ENCODE measurements at regions of chr14 and their contacts with region 1.

Region 1: GRCh38 chr14:63641473-63642228 is at the start of gene WDR89:
- DNase-seq: peak; percentile 94 to 99
- H3K4me3 ChIP-seq: peak within 1 kb of the TSS; percentile 79 to 83
- H3K27ac ChIP-seq: peak within 1 kb of the TSS; percentile 93 to 94
- H3K4me1 ChIP-seq: peaks cover 3 to 11% of the 10 kb centered on the region in 2 donors
- H3K27me3 ChIP-seq: no peaks in the 10 kb centered on the region
- CTCF ChIP-seq: peak; percentile 71 to 86 (median 76)
- total RNA-seq, gene WDR89: not detected

Region 2: DNA sequence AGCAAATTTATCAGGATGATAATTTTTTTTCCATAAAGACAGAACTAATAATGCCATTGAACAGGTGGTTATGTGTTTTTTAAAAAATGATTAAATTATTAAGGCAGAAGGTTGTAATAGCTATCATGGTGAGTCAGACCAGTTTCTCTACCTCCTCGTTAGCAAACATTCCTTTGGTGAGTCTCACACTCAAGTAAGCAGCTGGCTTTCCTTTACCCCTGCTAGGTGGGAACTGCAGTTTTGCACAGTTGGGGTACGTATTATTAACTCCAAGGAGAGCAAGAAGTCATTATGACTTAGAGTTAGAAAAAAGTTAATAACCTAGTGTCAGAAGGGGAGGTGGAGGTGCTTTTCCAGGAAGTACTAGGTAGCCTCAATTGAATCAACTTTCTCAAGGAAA is 1714.1 kb before region 1 on chr14:
- intact Hi-C with region 1: no loop called
- DNase-seq: no peak
- H3K4me3 ChIP-seq: no peak overlapping the region
- H3K27ac ChIP-seq: no peak overlapping the region
- H3K4me1 ChIP-seq: peaks cover 0 to 2% of the 10 kb centered on the region in 2 donors
- H3K27me3 ChIP-seq: no peaks in the 10 kb centered on the region
- CTCF ChIP-seq: no peak

Region 3: DNA sequence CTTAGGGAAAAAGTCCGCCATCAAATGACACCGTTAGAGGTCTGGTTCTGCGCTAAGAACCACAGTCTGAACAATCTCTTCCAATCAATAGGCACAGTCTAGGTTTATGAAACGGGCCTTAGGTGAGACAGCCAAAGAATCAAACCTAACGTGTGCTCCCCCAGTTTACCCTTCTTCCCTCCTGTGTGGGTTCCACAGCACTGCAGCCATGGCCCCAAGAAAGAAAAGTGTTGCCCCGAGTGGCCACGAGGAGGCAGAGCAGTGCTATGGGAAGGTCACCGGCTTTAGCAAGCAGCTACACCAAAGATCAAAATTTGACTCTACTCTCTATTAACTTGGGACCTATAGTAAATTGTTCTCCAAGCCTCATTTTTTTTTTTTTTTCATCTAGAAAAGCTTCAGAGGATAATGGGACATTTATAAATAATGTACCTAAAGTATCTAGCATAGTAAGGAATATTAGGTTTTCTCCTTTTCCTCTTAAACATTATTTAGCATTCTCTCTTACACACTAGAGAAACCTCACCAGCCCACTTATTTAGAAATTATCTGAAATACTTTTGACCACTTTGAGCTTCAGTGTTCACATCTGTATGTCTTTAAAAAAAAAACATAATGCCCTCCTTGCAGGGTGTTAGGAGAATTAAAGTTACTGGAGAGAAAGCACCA is 252.8 kb before region 1 on chr14:
- intact Hi-C with region 1: loop called (anchors 1 kb)
- DNase-seq: no peak
- H3K4me3 ChIP-seq: no peak overlapping the region
- H3K27ac ChIP-seq: no peak overlapping the region
- H3K4me1 ChIP-seq: no peaks in the 10 kb centered on the region
- H3K27me3 ChIP-seq: no peaks in the 10 kb centered on the region
- CTCF ChIP-seq: peak; percentile 53 to 82 (median 79)

Region 4: GRCh38 chr14:63513756-63514155 is 127.9 kb before region 1 on chr14:
- intact Hi-C with region 1: no loop called
- DNase-seq: no peak
- H3K4me3 ChIP-seq: no peak overlapping the region
- H3K27ac ChIP-seq: no peak overlapping the region
- H3K4me1 ChIP-seq: peaks cover 0 to 10% of the 10 kb centered on the region in 2 donors
- H3K27me3 ChIP-seq: no peaks in the 10 kb centered on the region
- CTCF ChIP-seq: no peak

Region 5: GRCh38 chr14:63727774-63728728 is 86.4 kb after region 1 on chr14 and contains the start of gene SGPP1:
- intact Hi-C with region 1: loop called (anchors 2 kb)
- DNase-seq: peak; percentile 22 to 89
- H3K4me3 ChIP-seq: peak within 1 kb of the TSS; percentile 96 to 100
- H3K27ac ChIP-seq: peak within 1 kb of the TSS; percentile 87 to 93
- H3K4me1 ChIP-seq: peaks cover 0 to 13% of the 10 kb centered on the region in 2 donors
- H3K27me3 ChIP-seq: no peaks in the 10 kb centered on the region
- CTCF ChIP-seq: peak; percentile 22 to 31 (median 25)
- total RNA-seq, gene SGPP1: 20.3 TPM

Region 6: GRCh38 chr14:64503478-64504309 is 862.0 kb after region 1 on chr14 and contains the start of gene ZBTB25:
- intact Hi-C with region 1: loop called (anchors 10 kb)
- DNase-seq: peak; percentile 86 to 96
- H3K4me3 ChIP-seq: peak within 1 kb of the TSS; percentile 91 to 94
- H3K27ac ChIP-seq: peak within 1 kb of the TSS; percentile 99
- H3K4me1 ChIP-seq: peaks cover 13 to 44% of the 10 kb centered on the region in 2 donors
- H3K27me3 ChIP-seq: no peaks in the 10 kb centered on the region
- CTCF ChIP-seq: no peak
- total RNA-seq, gene ZBTB25: 2.9 TPM

Region 7: DNA sequence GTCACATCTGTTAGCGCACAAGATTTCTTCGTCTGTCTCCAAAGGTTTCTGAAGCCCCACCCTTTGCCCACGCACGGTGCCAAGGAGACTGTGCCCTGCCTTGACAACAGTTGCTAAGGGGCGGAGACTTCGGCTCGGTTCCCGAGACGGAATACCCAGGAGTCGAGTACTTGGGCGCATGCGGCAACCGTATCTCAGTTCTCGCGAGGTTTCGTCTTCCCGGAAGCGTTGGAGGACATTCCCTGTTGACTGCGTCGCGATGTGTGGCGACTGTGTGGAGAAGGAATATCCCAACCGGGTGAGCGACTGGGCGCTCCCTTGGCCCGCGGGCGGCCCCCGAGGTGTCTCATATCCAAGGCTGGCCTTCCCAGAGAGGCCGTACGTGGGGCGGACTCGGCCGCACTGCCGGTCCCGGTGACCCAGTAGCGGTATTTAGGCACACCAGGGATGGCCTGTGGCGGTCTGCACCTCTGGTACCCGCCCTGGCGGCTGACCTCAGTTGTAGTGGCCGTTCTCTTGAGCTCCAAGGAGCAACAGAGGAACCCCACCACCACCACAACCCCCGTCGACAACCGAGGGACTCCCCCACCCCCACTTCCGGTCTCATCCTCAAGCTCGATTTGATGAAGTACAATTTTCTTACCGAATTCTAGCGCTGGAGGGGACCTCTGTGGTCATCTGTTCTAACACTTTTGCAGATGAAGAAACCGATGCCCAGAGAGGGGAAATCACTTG is 1272.8 kb after region 1 on chr14 and contains the start of gene CHURC1:
- intact Hi-C with region 1: loop called (anchors 10 kb)
- DNase-seq: peak; percentile 98 to 100
- H3K4me3 ChIP-seq: peak within 1 kb of the TSS; percentile 90 to 99
- H3K27ac ChIP-seq: peak within 1 kb of the TSS; percentile 94 to 98
- H3K4me1 ChIP-seq: peaks cover 3 to 30% of the 10 kb centered on the region in 2 donors
- H3K27me3 ChIP-seq: no peaks in the 10 kb centered on the region
- CTCF ChIP-seq: no peak
- total RNA-seq, gene CHURC1: 31.9 TPM

Region 8: GRCh38 chr14:64928239-64929013 is 1286.8 kb after region 1 on chr14:
- intact Hi-C with region 1: no loop called
- DNase-seq: no peak
- H3K4me3 ChIP-seq: no peak overlapping the region
- H3K27ac ChIP-seq: peak overlapping the region; percentile 31 to 63
- H3K4me1 ChIP-seq: peaks cover 4 to 28% of the 10 kb centered on the region in 2 donors
- H3K27me3 ChIP-seq: no peaks in the 10 kb centered on the region
- CTCF ChIP-seq: no peak

Measured in ascending aorta (tissue), 2 donors.